Posterior cingulate gyrus (tissue), 11 donors: ENCODE measurements at regions of chr3 and their contacts with region 1.

Region 1: GRCh38 chr3:149273096-149273751 is 51.6 kb upstream of the CP start:
- DNase-seq: peak in 2 of 10 donors; percentile 21 to 36

Region 2: DNA sequence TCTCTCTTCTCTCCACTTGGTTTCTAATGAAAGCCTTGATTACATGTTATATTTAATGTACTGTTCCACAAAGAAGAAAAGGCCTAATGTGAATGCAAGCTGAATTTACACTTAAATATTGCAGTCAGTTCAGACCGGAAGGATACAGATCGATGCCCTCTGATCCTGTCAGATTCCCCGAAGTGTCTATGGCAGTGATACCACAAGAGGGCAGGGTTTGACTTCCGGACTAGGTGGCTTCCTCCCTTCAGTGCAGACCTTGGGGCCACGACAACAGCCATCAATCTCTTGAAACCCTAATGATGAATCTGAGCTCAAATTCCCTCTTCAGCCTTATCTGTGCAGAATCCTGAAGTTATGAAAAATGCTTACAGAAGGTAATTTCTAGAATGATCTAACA is 546.0 kb before region 1 on chr3:
- intact Hi-C with region 1: loop called (anchors 10 kb)
- DNase-seq: peak; percentile 24 to 93 (median 66)

Region 3: GRCh38 chr3:148955544-148956346 is 317.5 kb before region 1 on chr3:
- intact Hi-C with region 1: loop called (anchors 1 kb)
- DNase-seq: peak in 1 of 10 donors; percentile 29

Region 4: GRCh38 chr3:149120051-149120972 is 152.9 kb before region 1 on chr3:
- intact Hi-C with region 1: loop called (anchors 1 kb)
- DNase-seq: no peak

Region 5: DNA sequence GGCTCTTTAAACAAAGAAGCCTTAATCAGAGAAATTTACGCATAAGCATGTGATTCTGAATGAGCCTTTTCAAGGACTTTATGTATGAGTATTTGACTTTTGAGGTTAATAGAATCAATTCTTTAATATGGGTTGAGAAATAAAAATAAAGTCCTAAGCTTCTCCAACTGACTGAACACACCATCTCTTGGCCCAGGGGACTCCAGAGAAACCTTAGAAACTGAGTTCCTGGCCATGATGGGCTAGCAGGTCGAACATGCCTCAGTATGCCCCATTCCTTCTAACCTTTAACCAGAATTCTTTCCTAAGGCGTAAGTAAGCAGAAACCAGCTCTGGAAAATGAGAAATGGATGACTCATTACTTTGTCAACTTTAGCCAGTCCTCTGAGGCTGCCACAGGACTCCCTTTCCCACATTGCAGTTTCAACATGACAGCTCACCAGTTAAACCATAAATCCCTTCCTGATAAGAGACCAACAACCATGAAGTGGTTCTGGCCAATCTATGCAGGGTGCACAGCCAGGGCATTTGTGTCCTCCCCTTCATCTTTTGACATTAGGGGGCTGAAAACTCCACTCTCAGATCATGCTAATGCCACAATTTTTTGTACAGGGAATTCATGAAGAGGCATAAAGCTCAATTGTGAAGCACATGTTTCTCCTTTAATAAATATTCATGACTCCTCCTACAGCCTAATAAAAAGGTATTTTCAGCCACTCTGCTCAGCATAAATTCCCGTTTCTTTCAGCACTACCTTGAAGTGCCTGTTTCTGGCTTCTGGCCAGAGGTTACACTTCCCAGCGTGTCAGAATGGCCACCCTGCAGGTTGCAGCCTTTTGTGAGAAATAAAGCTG is 26.9 kb after region 1 on chr3:
- intact Hi-C with region 1: no loop called
- DNase-seq: no peak